Dendritic cell treated with granulocyte-macrophage colony-stimulating factor and Interleukin-4, amounts not matched to agents 40 ng/mL and 50 ng/mL, for 4 days (primary cell): ENCODE measurements at regions of chr5 and their contacts with region 1.

Region 1: GRCh38 chr5:157816682-157817386 is 42.1 kb downstream of the CLINT1 start:
- H3K4me3 Mint-ChIP-seq: no peak overlapping the region
- H3K27ac Mint-ChIP-seq: no peak overlapping the region
- H3K4me1 Mint-ChIP-seq: peaks cover 5% of the 10 kb centered on the region
- H3K27me3 Mint-ChIP-seq: no peaks in the 10 kb centered on the region

Region 2: GRCh38 chr5:155954701-155955445 is 1862.0 kb before region 1 on chr5:
- intact Hi-C with region 1: no loop called
- H3K4me3 Mint-ChIP-seq: no peak overlapping the region
- H3K27ac Mint-ChIP-seq: no peak overlapping the region
- H3K4me1 Mint-ChIP-seq: no peaks in the 10 kb centered on the region
- H3K27me3 Mint-ChIP-seq: no peaks in the 10 kb centered on the region

Region 3: GRCh38 chr5:157390551-157391297 is 426.1 kb before region 1 on chr5:
- intact Hi-C with region 1: no loop called
- H3K4me3 Mint-ChIP-seq: no peak overlapping the region
- H3K27ac Mint-ChIP-seq: no peak overlapping the region
- H3K4me1 Mint-ChIP-seq: no peaks in the 10 kb centered on the region
- H3K27me3 Mint-ChIP-seq: no peaks in the 10 kb centered on the region

Region 4: GRCh38 chr5:157799578-157799977 is 17.3 kb before region 1 on chr5:
- intact Hi-C with region 1: no loop called
- H3K4me3 Mint-ChIP-seq: no peak overlapping the region
- H3K27ac Mint-ChIP-seq: no peak overlapping the region
- H3K4me1 Mint-ChIP-seq: no peaks in the 10 kb centered on the region
- H3K27me3 Mint-ChIP-seq: no peaks in the 10 kb centered on the region

Region 5: DNA sequence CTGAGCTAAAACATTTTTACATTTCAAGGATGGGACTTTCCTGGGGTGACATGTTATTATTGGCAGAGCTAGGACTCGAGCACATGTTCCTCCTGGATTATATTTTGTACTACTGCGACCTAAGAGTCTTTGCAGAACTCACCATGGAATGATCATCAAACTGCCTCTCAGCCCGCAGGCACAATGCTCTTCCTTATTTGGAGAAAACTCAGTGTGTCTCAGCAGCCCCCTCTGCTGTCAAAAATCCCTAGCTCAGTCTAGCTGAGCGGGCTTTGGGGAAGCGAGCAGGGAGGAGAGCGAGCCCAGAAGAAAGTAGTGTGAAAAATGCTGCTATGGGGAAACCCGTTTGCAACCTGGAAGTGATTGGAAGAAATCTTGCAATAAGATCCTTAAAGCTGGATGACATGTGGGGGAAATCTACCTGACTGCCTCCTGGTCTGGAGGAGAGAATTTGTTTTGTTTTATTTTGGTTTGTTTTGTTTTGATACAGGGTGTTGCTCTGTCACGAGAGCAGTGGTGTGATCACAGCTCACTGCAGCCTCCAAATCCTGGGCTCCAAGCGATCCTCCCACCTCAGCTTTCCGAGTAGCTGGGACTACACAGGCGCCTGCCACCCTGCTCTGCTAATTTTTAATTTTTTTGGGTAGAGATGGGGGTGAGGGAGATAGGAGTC is 132.0 kb after region 1 on chr5:
- intact Hi-C with region 1: loop called (anchors 1 kb)
- H3K4me3 Mint-ChIP-seq: no peak overlapping the region
- H3K27ac Mint-ChIP-seq: no peak overlapping the region
- H3K4me1 Mint-ChIP-seq: peaks cover 7% of the 10 kb centered on the region
- H3K27me3 Mint-ChIP-seq: peaks cover 2% of the 10 kb centered on the region

Region 6: DNA sequence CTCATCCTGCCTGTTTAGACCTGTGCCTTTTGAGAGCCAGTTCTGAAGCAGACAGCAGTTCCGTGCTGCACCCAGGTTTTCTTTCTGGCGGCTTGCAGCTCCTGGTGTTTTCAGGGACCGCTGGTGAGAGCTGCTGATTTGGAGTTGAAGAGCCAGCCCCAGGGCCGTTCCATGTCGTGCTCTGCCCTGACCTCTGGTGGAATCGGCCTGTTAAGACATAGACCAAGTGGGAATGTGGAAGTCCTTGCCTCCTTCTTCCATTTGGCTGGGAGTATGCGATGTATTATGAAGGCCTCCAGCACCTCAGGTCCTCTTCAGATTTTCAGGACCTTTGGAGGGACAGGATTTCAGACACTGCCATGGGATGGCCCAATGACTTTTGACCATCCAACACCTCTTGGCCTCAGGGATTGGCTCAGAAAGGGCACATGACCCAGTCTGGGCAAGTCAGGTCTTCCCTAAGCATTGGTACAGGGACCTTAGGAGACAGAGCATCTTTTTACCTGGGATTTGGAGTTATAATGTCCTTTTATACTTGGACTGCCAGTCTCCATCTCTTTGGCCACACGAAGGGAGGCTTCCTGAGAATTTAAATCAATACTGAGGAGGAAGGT is 178.2 kb after region 1 on chr5:
- intact Hi-C with region 1: loop called (anchors 2 kb)
- H3K4me3 Mint-ChIP-seq: no peak overlapping the region
- H3K27ac Mint-ChIP-seq: no peak overlapping the region
- H3K4me1 Mint-ChIP-seq: peaks cover 8% of the 10 kb centered on the region
- H3K27me3 Mint-ChIP-seq: peaks cover 3% of the 10 kb centered on the region